ENCODE measurements at regions of chr11 and their contacts with region 1.

Region 1: DNA sequence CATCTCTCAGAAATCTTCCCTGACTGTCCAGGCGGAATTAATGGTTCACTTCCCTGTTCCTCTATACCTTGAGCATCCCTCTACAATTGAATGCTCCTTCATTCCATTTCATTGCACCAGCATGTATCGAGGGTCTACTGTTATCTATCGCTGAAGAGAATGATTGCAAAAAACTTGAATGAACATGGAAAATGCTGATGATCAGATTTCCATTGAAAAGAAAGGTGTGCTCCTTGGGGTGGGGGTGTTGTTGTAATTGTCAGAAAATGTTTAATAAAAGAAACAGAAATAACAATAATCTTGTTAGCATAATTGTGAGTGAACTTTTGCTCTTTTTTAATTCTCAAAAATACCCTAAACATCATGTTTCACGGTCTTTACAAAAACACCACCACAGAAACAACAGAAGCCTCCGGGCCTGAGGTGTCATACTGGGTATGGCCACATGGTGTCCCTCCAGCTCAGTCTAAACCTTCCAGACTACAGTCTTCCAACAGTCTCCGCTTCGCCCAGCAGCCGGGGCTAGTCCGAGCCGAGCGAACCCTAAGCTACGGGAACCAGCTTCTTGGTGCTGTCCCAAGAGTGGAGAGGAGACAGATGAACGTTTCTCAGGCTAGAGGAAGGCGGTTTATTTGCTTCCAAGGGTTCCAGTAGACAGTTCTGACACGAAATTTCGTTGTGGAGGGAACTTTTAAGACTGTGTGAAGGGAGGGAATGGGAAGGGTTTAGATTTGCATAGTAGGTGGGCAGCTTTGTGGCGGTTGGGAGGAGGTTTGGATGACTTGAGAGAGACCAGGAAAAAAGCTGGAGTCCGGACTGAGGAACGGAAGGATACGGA is 75.8 kb upstream of the ZBED5 start:
- DNase-seq: peak; percentile 94
- H3K4me3 ChIP-seq: peak overlapping the region; percentile 14 to 73 (median 20)
- H3K27ac ChIP-seq: no peak overlapping the region
- H3K4me1 ChIP-seq: peaks cover 12% of the 10 kb centered on the region
- H3K27me3 ChIP-seq: peaks cover 0 to 12% of the 10 kb centered on the region in 2 experiments
- CTCF ChIP-seq: peak; percentile 85 to 92
- POLR2A ChIP-seq: no peak

Region 2: GRCh38 chr11:10792398-10792975 is 141.2 kb before region 1 on chr11:
- CTCF ChIA-PET with region 1: interaction called, 29 read pairs
- POLR2A ChIA-PET with region 1: interaction called, 5 read pairs
- dilution Hi-C with region 1: no loop called
- intact Hi-C with region 1: loop called (anchors 1 kb)
- DNase-seq: peak; percentile 69
- H3K4me3 ChIP-seq: no peak overlapping the region
- H3K27ac ChIP-seq: no peak overlapping the region
- H3K4me1 ChIP-seq: no peaks in the 10 kb centered on the region
- H3K27me3 ChIP-seq: no peaks in the 10 kb centered on the region
- CTCF ChIP-seq: peak; percentile 97 to 98
- POLR2A ChIP-seq: no peak

Region 3: DNA sequence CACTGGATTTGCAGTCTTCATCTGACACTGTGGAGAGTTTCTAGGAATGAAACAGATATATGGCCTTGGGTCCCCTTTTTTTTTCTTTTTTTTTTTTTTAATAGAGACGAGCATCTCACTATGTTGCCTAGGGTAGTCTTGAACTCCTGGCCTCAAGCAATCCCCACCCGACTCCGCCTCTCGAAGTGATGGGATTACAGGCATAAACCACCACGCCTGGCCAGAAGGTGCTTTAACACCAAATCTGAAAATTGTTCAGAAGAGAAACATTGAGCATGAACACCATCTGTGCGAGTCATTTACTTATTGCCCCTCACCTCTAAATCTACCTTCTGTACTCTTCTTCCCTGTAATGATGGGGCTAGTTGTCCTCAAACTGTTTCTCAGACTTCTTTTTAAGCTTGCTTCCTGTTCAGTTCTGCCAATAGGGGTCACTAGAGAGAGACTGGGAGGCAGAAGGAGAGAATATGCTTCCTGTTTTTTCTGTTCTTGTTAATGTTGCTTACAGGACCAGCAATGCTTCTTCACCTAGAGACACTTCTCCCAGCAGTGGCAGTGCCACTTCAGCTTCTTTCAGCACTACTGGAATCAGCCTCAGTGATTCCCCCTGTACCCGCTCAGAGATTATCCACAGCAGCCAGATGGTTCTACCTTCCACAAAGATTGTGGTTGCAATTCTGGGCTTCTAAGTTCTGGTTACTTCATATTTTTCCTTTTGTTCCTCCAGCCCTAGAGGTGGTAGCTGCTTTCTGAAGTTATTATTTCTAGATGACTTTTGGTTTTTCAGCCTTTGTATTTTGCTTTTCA is 55.1 kb before region 1 on chr11:
- CTCF ChIA-PET with region 1: interaction called, 27 read pairs
- POLR2A ChIA-PET with region 1: no interaction called
- dilution Hi-C with region 1: no loop called
- intact Hi-C with region 1: loop called (anchors 1 kb)
- DNase-seq: peak; percentile 69
- H3K4me3 ChIP-seq: no peak overlapping the region
- H3K27ac ChIP-seq: no peak overlapping the region
- H3K4me1 ChIP-seq: no peaks in the 10 kb centered on the region
- H3K27me3 ChIP-seq: no peaks in the 10 kb centered on the region
- CTCF ChIP-seq: peak; percentile 68 to 77
- POLR2A ChIP-seq: no peak

Region 4: GRCh38 chr11:10943968-10944367 is 10.3 kb after region 1 on chr11:
- CTCF ChIA-PET with region 1: interaction called, 32 read pairs
- POLR2A ChIA-PET with region 1: interaction called, 3 read pairs
- dilution Hi-C with region 1: no loop called
- intact Hi-C with region 1: no loop called
- DNase-seq: no peak
- H3K4me3 ChIP-seq: no peak overlapping the region
- H3K27ac ChIP-seq: no peak overlapping the region
- H3K4me1 ChIP-seq: no peaks in the 10 kb centered on the region
- H3K27me3 ChIP-seq: peaks cover 3 to 13% of the 10 kb centered on the region in 2 experiments
- CTCF ChIP-seq: no peak
- POLR2A ChIP-seq: no peak

Region 5: GRCh38 chr11:11022125-11022730 is 88.6 kb after region 1 on chr11:
- CTCF ChIA-PET with region 1: interaction called, 123 read pairs
- POLR2A ChIA-PET with region 1: no interaction called
- dilution Hi-C with region 1: no loop called
- intact Hi-C with region 1: loop called (anchors 1 kb)
- DNase-seq: peak; percentile 29
- H3K4me3 ChIP-seq: no peak overlapping the region
- H3K27ac ChIP-seq: no peak overlapping the region
- H3K4me1 ChIP-seq: peaks cover 19% of the 10 kb centered on the region
- H3K27me3 ChIP-seq: peaks cover 0 to 9% of the 10 kb centered on the region in 2 experiments
- CTCF ChIP-seq: peak; percentile 16 to 26
- POLR2A ChIP-seq: no peak

Region 6: GRCh38 chr11:11157185-11157584 is 223.5 kb after region 1 on chr11:
- CTCF ChIA-PET with region 1: interaction called, 20 read pairs
- POLR2A ChIA-PET with region 1: no interaction called
- dilution Hi-C with region 1: no loop called
- intact Hi-C with region 1: no loop called
- DNase-seq: peak; percentile 6
- H3K4me3 ChIP-seq: no peak overlapping the region
- H3K27ac ChIP-seq: no peak overlapping the region
- H3K4me1 ChIP-seq: no peaks in the 10 kb centered on the region
- H3K27me3 ChIP-seq: no peaks in the 10 kb centered on the region
- CTCF ChIP-seq: peak in 1 of 2 donors; percentile 54
- POLR2A ChIP-seq: no peak

Region 7: GRCh38 chr11:11841723-11842420 is 908.2 kb after region 1 on chr11 and contains the start of gene USP47:
- CTCF ChIA-PET with region 1: no interaction called
- POLR2A ChIA-PET with region 1: no interaction called
- dilution Hi-C with region 1: no loop called
- intact Hi-C with region 1: loop called (anchors 5 kb)
- DNase-seq: peak; percentile 87
- H3K4me3 ChIP-seq: peak within 1 kb of the TSS; percentile 81 to 97 (median 86)
- H3K27ac ChIP-seq: peak within 1 kb of the TSS; percentile 95
- H3K4me1 ChIP-seq: peaks cover 22% of the 10 kb centered on the region
- H3K27me3 ChIP-seq: no peaks in the 10 kb centered on the region
- CTCF ChIP-seq: peak; percentile 44 to 55
- POLR2A ChIP-seq: peak; percentile 97
- total RNA-seq, gene USP47: 38.0 and 41.5 TPM in 2 replicates